GM12878 (cell line): ENCODE measurements at regions of chr12 and their contacts with region 1.

Region 1: DNA sequence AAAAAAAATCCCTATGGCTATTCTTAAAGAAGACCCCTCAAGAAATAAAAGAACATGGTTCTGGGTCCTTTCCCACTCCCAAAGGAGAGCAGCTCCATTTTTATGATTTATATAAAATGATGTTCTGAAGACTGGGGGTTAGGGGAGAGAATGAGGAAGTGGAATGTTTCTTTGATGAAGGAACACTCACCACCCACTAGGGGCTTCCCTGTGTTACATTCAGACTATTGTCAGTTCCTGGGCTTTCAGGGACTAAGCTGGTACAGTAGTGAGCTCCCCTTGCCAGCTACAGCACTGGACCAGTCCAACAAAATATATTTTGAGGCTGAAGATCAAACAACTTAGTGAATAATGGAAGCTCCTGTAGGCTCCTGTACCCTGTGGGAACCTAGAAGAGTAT is 98.9 kb downstream of the HMGA2 start:
- DNase-seq: no peak
- ATAC-seq: peak; percentile 81
- H3K4me3 ChIP-seq: no peak overlapping the region
- H3K27ac ChIP-seq: no peak overlapping the region
- H3K4me1 ChIP-seq: peaks cover 9% of the 10 kb centered on the region; the same call in 1 of the 2 replicates
- H3K27me3 ChIP-seq: no peaks in the 10 kb centered on the region
- CTCF ChIP-seq: peak; percentile 20 to 23 (median 22); a peak in 3 of 6 replicates
- EP300 ChIP-seq: no peak
- POLR2A ChIP-seq: no peak
- RAD21 ChIP-seq: peak; percentile 35

Region 2: DNA sequence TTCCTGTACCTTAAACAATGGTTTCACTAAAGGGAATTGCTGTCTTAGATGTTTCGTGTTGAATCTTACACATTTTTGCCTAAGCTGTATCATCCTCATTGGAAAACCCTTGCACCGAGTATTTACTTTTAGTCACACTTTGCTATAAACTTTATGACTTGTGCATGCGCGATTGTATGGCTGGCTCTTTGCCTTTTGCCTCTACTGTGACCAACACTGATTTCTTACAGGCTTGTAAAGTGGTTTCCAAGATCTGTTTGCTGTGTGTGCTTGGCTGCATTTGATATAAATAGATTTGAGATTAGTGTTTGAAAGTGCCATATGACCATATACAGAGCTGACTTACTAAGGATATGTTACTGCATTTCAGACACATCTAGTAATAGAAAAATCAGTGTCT is 1272.5 kb before region 1 on chr12:
- CTCF ChIA-PET with region 1: no interaction called
- POLR2A ChIA-PET with region 1: no interaction called
- RAD21 ChIA-PET with region 1: no interaction called
- SMC1A ChIA-PET with region 1: no interaction called
- in situ Hi-C with region 1: no loop called
- intact Hi-C with region 1: no loop called
- DNase-seq: no peak
- ATAC-seq: no peak
- H3K4me3 ChIP-seq: no peak overlapping the region
- H3K27ac ChIP-seq: no peak overlapping the region
- H3K4me1 ChIP-seq: peaks cover 4% of the 10 kb centered on the region
- H3K27me3 ChIP-seq: no peaks in the 10 kb centered on the region
- CTCF ChIP-seq: no peak
- EP300 ChIP-seq: no peak
- POLR2A ChIP-seq: no peak
- RAD21 ChIP-seq: no peak

Region 3: DNA sequence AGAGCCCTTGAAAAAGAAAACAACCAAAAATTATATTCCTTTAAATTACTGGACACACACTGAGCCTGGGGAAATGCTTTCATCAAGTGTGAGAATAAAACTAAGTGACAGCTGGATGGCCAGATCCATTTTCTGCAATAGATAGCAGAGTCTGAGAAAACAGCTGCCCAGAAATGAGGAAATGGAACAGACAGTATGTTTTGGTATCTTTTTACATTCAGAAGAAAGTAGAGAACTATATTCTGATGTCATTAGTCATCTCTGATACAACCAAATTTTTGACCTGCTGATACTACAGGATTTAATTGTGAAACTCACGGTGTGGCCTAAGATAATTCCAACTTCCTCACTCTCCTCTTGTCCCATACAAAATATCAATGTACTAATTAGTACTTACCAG is 20.7 kb before region 1 on chr12:
- CTCF ChIA-PET with region 1: interaction called, 9 read pairs
- POLR2A ChIA-PET with region 1: interaction called, 10 read pairs
- RAD21 ChIA-PET with region 1: interaction called, 12 read pairs
- SMC1A ChIA-PET with region 1: interaction called, 18 read pairs
- in situ Hi-C with region 1: no loop called
- intact Hi-C with region 1: no loop called
- DNase-seq: no peak
- ATAC-seq: peak; percentile 87
- H3K4me3 ChIP-seq: no peak overlapping the region
- H3K27ac ChIP-seq: peak overlapping the region; percentile 24; the same call in 1 of the 2 replicates
- H3K4me1 ChIP-seq: peaks cover 2% of the 10 kb centered on the region; the same call in 1 of the 2 replicates
- H3K27me3 ChIP-seq: no peaks in the 10 kb centered on the region
- CTCF ChIP-seq: no peak
- EP300 ChIP-seq: 0 out of 4 replicates have a peak, but pooled peaks of 1 of the 2 experiments have one; percentile 36
- POLR2A ChIP-seq: no peak
- RAD21 ChIP-seq: no peak

Region 4: DNA sequence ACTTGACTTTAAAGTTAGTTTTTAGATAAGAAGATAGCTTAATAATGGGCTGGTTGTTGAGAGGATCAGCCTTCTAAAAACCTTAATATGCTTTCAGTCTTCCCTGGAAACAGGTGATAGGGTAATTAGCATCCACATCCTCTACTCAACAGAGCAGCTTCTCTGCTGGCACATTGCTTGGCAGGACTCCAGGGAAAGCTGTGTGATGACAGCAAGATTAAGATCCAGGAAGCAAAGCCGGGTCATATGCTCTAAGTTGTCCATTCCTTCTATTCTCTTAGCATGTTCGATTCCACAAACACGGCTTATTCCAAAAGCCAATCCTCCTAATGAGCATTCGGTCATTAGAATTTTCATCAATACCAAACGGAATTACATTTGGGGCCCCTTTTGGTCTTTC is 11.9 kb before region 1 on chr12:
- CTCF ChIA-PET with region 1: interaction called, 9 read pairs
- POLR2A ChIA-PET with region 1: interaction called, 10 read pairs
- RAD21 ChIA-PET with region 1: interaction called, 6 read pairs
- SMC1A ChIA-PET with region 1: interaction called, 16 read pairs
- in situ Hi-C with region 1: no loop called
- intact Hi-C with region 1: no loop called
- DNase-seq: no peak
- ATAC-seq: no peak
- H3K4me3 ChIP-seq: no peak overlapping the region
- H3K27ac ChIP-seq: no peak overlapping the region
- H3K4me1 ChIP-seq: peaks cover 6% of the 10 kb centered on the region; the same call in 1 of the 2 replicates
- H3K27me3 ChIP-seq: no peaks in the 10 kb centered on the region
- CTCF ChIP-seq: no peak
- EP300 ChIP-seq: no peak
- POLR2A ChIP-seq: no peak
- RAD21 ChIP-seq: no peak

Region 5: GRCh38 chr12:65941388-65941787 is 18.2 kb after region 1 on chr12:
- CTCF ChIA-PET with region 1: interaction called, 3 read pairs
- POLR2A ChIA-PET with region 1: no interaction called
- RAD21 ChIA-PET with region 1: interaction called, 7 read pairs
- SMC1A ChIA-PET with region 1: interaction called, 17 read pairs
- in situ Hi-C with region 1: no loop called
- intact Hi-C with region 1: no loop called
- DNase-seq: no peak
- ATAC-seq: no peak
- H3K4me3 ChIP-seq: no peak overlapping the region
- H3K27ac ChIP-seq: no peak overlapping the region
- H3K4me1 ChIP-seq: no peaks in the 10 kb centered on the region
- H3K27me3 ChIP-seq: no peaks in the 10 kb centered on the region
- CTCF ChIP-seq: no peak
- EP300 ChIP-seq: no peak
- POLR2A ChIP-seq: no peak
- RAD21 ChIP-seq: no peak